ENCODE measurements at regions of chr7 and their contacts with region 1.

Region 1: DNA sequence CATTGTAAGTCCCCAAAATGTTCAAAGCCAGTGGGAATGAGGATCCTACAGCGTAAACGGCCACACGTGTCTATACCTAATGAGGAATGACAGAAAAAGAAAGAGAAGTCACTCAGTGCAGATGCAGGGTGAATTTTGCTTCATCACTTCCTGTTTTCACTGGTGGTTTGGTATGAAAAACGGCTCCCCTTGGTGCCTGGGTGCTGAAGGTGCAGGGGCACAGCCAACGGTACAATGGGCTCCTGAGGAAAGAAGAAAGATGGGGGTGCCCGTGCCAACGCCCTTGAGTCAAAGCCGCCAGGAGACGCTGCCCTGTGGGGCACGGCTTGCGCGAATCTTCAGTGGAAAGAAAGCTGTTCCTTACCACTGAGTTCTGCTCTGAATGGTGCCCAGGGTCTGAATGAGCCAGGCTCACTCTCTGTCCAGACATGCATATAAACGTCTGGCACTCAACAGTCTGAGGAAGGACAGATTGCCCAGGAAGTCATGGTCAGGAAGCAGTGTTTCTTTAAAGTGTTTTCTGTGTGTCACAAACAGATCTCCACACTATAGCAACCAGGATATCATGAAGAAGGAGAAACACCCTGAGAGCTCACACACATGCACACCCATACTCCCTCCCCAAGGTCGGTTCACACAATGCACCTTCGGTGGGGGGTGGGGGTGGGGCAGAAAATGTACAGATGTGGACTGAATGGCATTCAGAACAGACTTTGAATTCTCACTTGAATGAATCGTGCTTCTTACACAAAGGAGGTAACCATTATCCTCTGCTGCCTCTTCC is 105.8 kb downstream of the ELMO1 start:
- DNase-seq: peak; percentile 86
- H3K4me3 Mint-ChIP-seq: peak overlapping the region; percentile 89
- H3K27ac Mint-ChIP-seq: peak overlapping the region; percentile 97
- H3K4me1 Mint-ChIP-seq: peaks cover 81% of the 10 kb centered on the region
- H3K27me3 Mint-ChIP-seq: no peaks in the 10 kb centered on the region

Region 2: GRCh38 chr7:37128327-37129034 is 214.4 kb before region 1 on chr7:
- CTCF ChIA-PET with region 1: no interaction called
- intact Hi-C with region 1: no loop called
- DNase-seq: no peak
- H3K4me3 Mint-ChIP-seq: no peak overlapping the region
- H3K27ac Mint-ChIP-seq: no peak overlapping the region
- H3K4me1 Mint-ChIP-seq: peaks cover 9% of the 10 kb centered on the region
- H3K27me3 Mint-ChIP-seq: no peaks in the 10 kb centered on the region

Region 3: GRCh38 chr7:37208528-37208927 is 134.4 kb before region 1 on chr7:
- CTCF ChIA-PET with region 1: no interaction called
- intact Hi-C with region 1: loop called (anchors 2 kb)
- DNase-seq: peak; percentile 52
- H3K4me3 Mint-ChIP-seq: no peak overlapping the region
- H3K27ac Mint-ChIP-seq: peak overlapping the region; percentile 56
- H3K4me1 Mint-ChIP-seq: peaks cover 23% of the 10 kb centered on the region
- H3K27me3 Mint-ChIP-seq: no peaks in the 10 kb centered on the region

Region 4: GRCh38 chr7:37284805-37285231 is 58.1 kb before region 1 on chr7:
- CTCF ChIA-PET with region 1: interaction called, 33 read pairs
- intact Hi-C with region 1: loop called (anchors 1 kb)
- DNase-seq: peak; percentile 53
- H3K4me3 Mint-ChIP-seq: no peak overlapping the region
- H3K27ac Mint-ChIP-seq: no peak overlapping the region
- H3K4me1 Mint-ChIP-seq: peaks cover 72% of the 10 kb centered on the region
- H3K27me3 Mint-ChIP-seq: no peaks in the 10 kb centered on the region

Region 5: DNA sequence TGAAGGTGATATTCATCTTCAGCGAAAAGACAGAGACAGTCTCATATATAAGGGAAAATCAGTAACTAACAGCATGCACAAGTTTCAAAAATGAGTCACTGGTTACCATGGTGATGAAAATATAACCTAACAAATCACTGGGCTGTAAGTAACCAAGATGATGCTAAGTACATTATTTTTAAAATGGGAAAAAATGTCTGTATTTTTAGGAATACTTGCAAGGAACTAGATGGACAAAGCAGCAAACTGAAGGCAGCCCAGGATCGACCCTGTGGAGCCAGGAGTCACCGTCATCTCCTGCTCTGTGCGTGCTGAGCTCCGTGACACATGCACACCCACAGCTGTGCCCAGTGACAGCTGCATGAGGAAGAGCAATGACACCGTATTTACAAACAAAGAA is 31.5 kb before region 1 on chr7:
- CTCF ChIA-PET with region 1: interaction called, 7 read pairs
- intact Hi-C with region 1: loop called (anchors 1 kb)
- DNase-seq: peak; percentile 17
- H3K4me3 Mint-ChIP-seq: no peak overlapping the region
- H3K27ac Mint-ChIP-seq: peak overlapping the region; percentile 50
- H3K4me1 Mint-ChIP-seq: peaks cover 75% of the 10 kb centered on the region
- H3K27me3 Mint-ChIP-seq: no peaks in the 10 kb centered on the region

Region 6: GRCh38 chr7:37365405-37365804 is 22.5 kb after region 1 on chr7:
- CTCF ChIA-PET with region 1: interaction called, 4 read pairs
- intact Hi-C with region 1: loop called (anchors 1 kb)
- DNase-seq: no peak
- H3K4me3 Mint-ChIP-seq: peak overlapping the region; percentile 15
- H3K27ac Mint-ChIP-seq: peak overlapping the region; percentile 99
- H3K4me1 Mint-ChIP-seq: peaks cover 88% of the 10 kb centered on the region
- H3K27me3 Mint-ChIP-seq: no peaks in the 10 kb centered on the region

Region 7: DNA sequence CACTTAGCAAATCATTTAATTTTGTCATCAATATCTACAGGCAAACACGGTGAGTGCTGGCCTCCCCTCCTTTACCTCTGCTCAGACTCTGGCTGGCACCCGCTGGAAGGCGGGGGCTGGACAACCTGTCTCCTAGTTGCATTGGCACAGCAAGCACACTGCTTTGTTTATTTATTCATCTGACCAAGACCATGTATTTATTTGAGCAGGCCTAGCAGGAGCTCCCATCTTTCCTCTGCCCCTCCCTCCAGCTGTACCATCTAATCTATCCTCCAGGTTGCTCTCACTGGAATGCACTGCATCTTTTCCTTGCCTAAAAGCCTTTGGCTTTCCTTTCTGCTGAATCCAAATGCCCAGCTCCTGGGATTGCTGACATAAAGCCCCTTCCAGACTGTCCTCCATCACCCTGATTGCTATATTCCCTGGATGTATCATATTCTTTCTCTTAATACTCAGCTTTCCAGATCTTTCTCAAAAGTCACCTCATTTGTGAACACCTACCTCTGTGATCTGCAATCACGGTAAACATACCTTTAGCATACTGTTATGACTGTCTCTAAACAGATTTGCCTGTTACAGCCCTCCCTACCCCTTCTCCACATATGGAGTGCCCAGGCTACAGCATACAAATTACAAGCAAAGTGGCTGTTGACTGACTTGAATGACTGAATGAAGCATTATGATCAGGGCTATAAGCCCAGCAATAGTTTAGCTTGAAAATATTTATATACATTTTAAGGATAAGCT is 96.2 kb after region 1 on chr7:
- CTCF ChIA-PET with region 1: no interaction called
- intact Hi-C with region 1: loop called (anchors 1 kb)
- DNase-seq: no peak
- H3K4me3 Mint-ChIP-seq: no peak overlapping the region
- H3K27ac Mint-ChIP-seq: peak overlapping the region; percentile 97
- H3K4me1 Mint-ChIP-seq: peaks cover 92% of the 10 kb centered on the region
- H3K27me3 Mint-ChIP-seq: no peaks in the 10 kb centered on the region

Region 8: GRCh38 chr7:38339953-38340819 is 997.3 kb after region 1 on chr7:
- CTCF ChIA-PET with region 1: no interaction called
- intact Hi-C with region 1: no loop called
- DNase-seq: no peak
- H3K4me3 Mint-ChIP-seq: no peak overlapping the region
- H3K27ac Mint-ChIP-seq: peak overlapping the region; percentile 36
- H3K4me1 Mint-ChIP-seq: peaks cover 53% of the 10 kb centered on the region
- H3K27me3 Mint-ChIP-seq: no peaks in the 10 kb centered on the region